GM12878 (cell line): ENCODE measurements at regions of chr17 and their contacts with region 1.

Region 1: DNA sequence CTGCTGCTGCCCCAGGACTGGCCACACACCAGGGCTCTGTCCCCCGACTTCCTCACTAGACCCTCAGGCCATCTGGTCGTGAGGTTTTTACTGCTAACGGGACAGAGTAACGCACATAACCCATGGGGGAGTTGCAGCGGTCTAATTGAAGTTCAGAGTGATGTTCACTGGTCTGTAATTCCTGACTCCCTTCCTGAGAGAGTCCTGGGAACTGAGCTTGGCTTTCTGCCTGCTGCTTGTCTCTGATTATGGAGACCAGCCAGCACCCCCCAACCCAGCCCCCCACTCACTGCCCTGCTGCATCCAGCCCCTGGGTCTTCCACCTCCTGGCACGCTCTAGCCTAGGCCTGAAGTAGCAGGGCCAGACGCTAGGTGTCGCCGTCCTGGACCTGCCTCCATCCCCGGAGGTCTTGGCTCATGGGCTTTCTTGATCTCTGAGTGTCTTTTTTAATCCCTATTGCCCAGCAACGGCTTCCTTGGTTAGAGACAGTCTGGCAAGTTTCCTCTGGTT is 192.9 kb downstream of the CCDC182 start:
- DNase-seq: no peak
- ATAC-seq: peak; percentile 91
- H3K4me3 ChIP-seq: no peak overlapping the region
- H3K27ac ChIP-seq: peak overlapping the region; percentile 89
- H3K4me1 ChIP-seq: peaks cover 34% of the 10 kb centered on the region
- H3K27me3 ChIP-seq: no peaks in the 10 kb centered on the region
- CTCF ChIP-seq: peak; percentile 59 to 84 (median 77)
- EP300 ChIP-seq: no peak
- POLR2A ChIP-seq: peak; percentile 35; the same call in 1 of the 2 replicates
- RAD21 ChIP-seq: peak; percentile 64

Region 2: DNA sequence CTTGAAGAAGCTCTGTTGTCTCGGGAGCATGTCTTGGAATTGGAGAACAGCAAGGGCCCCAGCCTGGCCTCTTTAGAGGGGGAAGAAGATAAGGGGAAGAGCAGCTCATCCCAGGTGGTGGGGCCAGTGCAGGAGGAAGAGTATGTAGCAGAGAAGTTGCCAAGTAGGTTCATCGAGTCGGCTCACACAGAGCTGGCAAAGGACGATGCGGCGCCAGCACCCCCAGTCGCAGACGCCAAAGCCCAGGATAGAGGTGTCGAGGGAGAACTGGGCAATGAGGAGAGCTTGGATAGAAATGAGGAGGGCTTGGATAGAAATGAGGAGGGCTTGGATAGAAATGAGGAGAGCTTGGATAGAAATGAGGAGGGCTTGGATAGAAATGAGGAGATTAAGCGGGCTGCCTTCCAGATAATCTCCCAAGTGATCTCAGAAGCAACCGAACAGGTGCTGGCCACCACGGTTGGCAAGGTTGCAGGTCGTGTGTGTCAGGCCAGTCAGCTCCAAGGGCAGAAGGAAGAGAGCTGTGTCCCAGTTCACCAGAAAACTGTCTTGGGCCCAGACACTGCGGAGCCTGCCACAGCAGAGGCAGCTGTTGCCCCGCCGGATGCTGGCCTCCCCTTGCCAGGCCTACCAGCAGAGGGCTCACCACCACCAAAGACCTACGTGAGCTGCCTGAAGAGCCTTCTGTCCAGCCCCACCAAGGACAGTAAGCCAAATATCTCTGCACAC is 445.9 kb before region 1 on chr17:
- CTCF ChIA-PET with region 1: no interaction called
- POLR2A ChIA-PET with region 1: no interaction called
- RAD21 ChIA-PET with region 1: no interaction called
- SMC1A ChIA-PET with region 1: no interaction called
- in situ Hi-C with region 1: no loop called
- intact Hi-C with region 1: no loop called
- DNase-seq: no peak
- ATAC-seq: no peak
- H3K4me3 ChIP-seq: no peak overlapping the region
- H3K27ac ChIP-seq: no peak overlapping the region
- H3K4me1 ChIP-seq: peaks cover 11% of the 10 kb centered on the region
- H3K27me3 ChIP-seq: no peaks in the 10 kb centered on the region
- CTCF ChIP-seq: peak in 2 of 3 experiments; percentile 15 to 17; a peak in 2 of 6 replicates
- EP300 ChIP-seq: no peak
- POLR2A ChIP-seq: no peak
- RAD21 ChIP-seq: no peak

Region 3: GRCh38 chr17:57541472-57542394 is 10.4 kb before region 1 on chr17:
- CTCF ChIA-PET with region 1: interaction called, 38 read pairs
- POLR2A ChIA-PET with region 1: interaction called, 6 read pairs
- RAD21 ChIA-PET with region 1: interaction called, 5 read pairs
- SMC1A ChIA-PET with region 1: interaction called, 34 read pairs
- in situ Hi-C with region 1: no loop called
- intact Hi-C with region 1: no loop called
- DNase-seq: no peak
- ATAC-seq: no peak
- H3K4me3 ChIP-seq: no peak overlapping the region
- H3K27ac ChIP-seq: 0 out of 2 replicates have a peak overlapping the region, but pooled peaks have one; percentile 10
- H3K4me1 ChIP-seq: peaks cover 31% of the 10 kb centered on the region
- H3K27me3 ChIP-seq: no peaks in the 10 kb centered on the region
- CTCF ChIP-seq: no peak
- EP300 ChIP-seq: no peak
- POLR2A ChIP-seq: no peak
- RAD21 ChIP-seq: no peak

Region 4: GRCh38 chr17:57577751-57578607 is 25.8 kb after region 1 on chr17:
- CTCF ChIA-PET with region 1: interaction called, 5 read pairs
- POLR2A ChIA-PET with region 1: no interaction called
- RAD21 ChIA-PET with region 1: interaction called, 4 read pairs
- SMC1A ChIA-PET with region 1: interaction called, 16 read pairs
- in situ Hi-C with region 1: no loop called
- intact Hi-C with region 1: no loop called
- DNase-seq: no peak
- ATAC-seq: peak; percentile 28; the same call in 2 of the 3 replicates
- H3K4me3 ChIP-seq: no peak overlapping the region
- H3K27ac ChIP-seq: peak overlapping the region; percentile 38; the same call in 1 of the 2 replicates
- H3K4me1 ChIP-seq: peaks cover 10% of the 10 kb centered on the region
- H3K27me3 ChIP-seq: no peaks in the 10 kb centered on the region
- CTCF ChIP-seq: no peak
- EP300 ChIP-seq: no peak
- POLR2A ChIP-seq: no peak
- RAD21 ChIP-seq: no peak